IMR-90 (cell line): ENCODE measurements at regions of chr13 and their contacts with region 1.

Region 1: DNA sequence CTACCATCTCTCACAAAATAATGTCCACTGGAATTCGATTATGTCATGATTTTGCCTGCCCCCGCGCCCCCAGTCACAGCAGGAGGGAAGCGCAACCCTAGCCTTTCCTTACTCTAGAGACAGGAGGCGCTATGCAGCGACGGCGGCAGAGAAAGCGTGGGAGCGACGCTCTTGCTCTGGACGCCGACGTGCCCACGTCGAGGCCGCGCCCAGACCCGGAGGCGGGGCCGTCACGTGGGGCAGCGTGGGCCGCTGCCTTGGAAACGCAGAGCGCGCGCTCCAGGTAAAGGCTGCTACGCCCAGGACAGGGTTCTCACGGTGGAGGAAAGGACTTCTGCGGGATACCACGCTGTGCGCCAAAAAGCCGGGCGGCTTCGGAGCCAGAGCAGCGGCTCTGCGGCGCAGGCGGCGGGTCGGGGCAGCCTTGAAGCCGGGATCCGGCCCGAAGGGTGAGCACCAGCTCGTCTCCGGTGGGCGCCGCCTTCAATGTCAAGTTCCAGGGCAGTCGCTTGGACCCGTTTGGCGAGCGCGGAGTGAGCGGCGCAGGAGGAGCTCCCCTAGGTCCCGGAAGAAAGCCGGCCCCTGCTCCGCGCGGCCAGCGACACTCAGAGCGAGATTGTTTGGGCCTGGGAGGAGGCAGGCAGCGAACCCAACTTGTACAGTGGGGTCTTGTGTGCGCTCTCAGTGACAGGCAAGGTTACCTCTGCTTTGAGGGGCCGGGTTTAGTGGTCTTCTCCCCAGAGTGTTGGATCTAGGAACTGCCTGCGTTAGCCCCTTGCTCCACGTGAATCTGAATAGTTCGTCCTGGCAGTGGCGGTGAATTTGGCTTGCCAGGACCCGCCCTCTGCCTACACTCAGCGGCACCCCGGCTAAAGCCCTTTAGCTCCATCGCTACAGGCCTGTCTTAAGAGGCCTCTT is 121.7 kb downstream of the MRPL57 start:
- DNase-seq: peak; percentile 87
- ATAC-seq: peak; percentile 99
- H3K4me3 ChIP-seq: peak overlapping the region; percentile 87
- H3K27ac ChIP-seq: peak overlapping the region; percentile 33; the same call in 1 of the 2 replicates
- H3K4me1 ChIP-seq: no peaks in the 10 kb centered on the region; the same call in 1 of the 2 replicates
- H3K27me3 ChIP-seq: no peaks in the 10 kb centered on the region
- CTCF ChIP-seq: peak; percentile 93
- POLR2A ChIP-seq: no peak
- RAD21 ChIP-seq: peak; percentile 47

Region 2: DNA sequence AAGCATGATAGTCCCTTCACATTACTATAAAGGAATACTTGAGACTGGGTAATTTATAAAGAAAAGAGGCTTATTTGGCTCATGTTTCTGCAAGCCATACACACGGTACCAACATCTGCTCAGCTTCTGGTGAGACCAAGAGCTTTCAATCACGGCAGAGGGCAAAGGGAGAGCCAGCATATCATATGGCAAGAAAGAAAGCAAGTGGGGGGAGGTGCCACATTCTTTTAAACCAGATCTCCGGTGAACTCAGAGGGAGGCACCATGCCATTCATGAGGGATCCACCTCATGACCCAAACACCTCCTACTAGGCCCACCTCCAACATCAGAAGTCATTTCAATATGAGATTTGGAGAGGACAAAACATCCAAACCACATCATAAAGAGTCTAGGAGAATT is 416.0 kb before region 1 on chr13:
- CTCF ChIA-PET with region 1: no interaction called
- POLR2A ChIA-PET with region 1: no interaction called
- dilution Hi-C with region 1: no loop called
- in situ Hi-C with region 1: no loop called
- intact Hi-C with region 1: no loop called
- DNase-seq: peak; percentile 8
- ATAC-seq: no peak
- H3K4me3 ChIP-seq: no peak overlapping the region
- H3K27ac ChIP-seq: no peak overlapping the region
- H3K4me1 ChIP-seq: peaks cover 6% of the 10 kb centered on the region
- H3K27me3 ChIP-seq: no peaks in the 10 kb centered on the region
- CTCF ChIP-seq: no peak
- POLR2A ChIP-seq: no peak
- RAD21 ChIP-seq: no peak

Region 3: GRCh38 chr13:21006141-21007005 is 291.8 kb before region 1 on chr13:
- CTCF ChIA-PET with region 1: no interaction called
- POLR2A ChIA-PET with region 1: no interaction called
- dilution Hi-C with region 1: no loop called
- in situ Hi-C with region 1: no loop called
- intact Hi-C with region 1: no loop called
- DNase-seq: no peak
- ATAC-seq: no peak
- H3K4me3 ChIP-seq: no peak overlapping the region
- H3K27ac ChIP-seq: peak overlapping the region; percentile 29
- H3K4me1 ChIP-seq: peaks cover 18% of the 10 kb centered on the region
- H3K27me3 ChIP-seq: no peaks in the 10 kb centered on the region
- CTCF ChIP-seq: no peak
- POLR2A ChIP-seq: no peak
- RAD21 ChIP-seq: no peak

Region 4: DNA sequence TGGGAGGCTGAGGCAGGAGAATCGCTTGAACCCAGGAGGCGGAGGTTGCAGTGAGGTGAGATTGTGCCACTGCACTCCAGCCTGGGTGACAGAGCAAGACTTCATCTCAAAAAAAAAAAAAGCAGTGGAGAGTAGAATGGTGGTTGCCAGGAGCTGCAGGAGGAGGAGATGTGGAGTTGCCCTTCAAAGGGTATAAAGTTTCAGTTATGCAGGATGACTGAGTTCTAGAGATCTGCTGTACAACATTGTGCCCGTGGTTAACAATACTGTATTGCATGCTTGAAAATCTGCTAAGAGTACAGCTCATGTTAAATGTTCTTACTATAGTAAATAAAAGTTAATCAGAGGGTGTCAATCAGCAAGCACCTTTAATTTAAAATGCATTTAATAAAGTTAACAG is 208.3 kb before region 1 on chr13:
- CTCF ChIA-PET with region 1: no interaction called
- POLR2A ChIA-PET with region 1: no interaction called
- dilution Hi-C with region 1: no loop called
- in situ Hi-C with region 1: no loop called
- intact Hi-C with region 1: no loop called
- DNase-seq: no peak
- ATAC-seq: no peak
- H3K4me3 ChIP-seq: no peak overlapping the region
- H3K27ac ChIP-seq: no peak overlapping the region
- H3K4me1 ChIP-seq: no peaks in the 10 kb centered on the region
- H3K27me3 ChIP-seq: no peaks in the 10 kb centered on the region
- CTCF ChIP-seq: no peak
- POLR2A ChIP-seq: no peak
- RAD21 ChIP-seq: no peak

Region 5: GRCh38 chr13:21176220-21176982 is 121.8 kb before region 1 on chr13 and contains the starts of genes MRPL57 and SKA3:
- CTCF ChIA-PET with region 1: no interaction called
- POLR2A ChIA-PET with region 1: no interaction called
- dilution Hi-C with region 1: no loop called
- in situ Hi-C with region 1: no loop called
- intact Hi-C with region 1: loop called (anchors 2 kb)
- DNase-seq: peak; percentile 91
- ATAC-seq: peak; percentile 91
- H3K4me3 ChIP-seq: peak within 1 kb of the TSS; percentile 87
- H3K27ac ChIP-seq: peak within 1 kb of the TSS; percentile 87
- H3K4me1 ChIP-seq: 0 out of 2 replicates have a peak, but pooled peaks cover 2% of the 10 kb centered on the region
- H3K27me3 ChIP-seq: no peaks in the 10 kb centered on the region
- CTCF ChIP-seq: no peak
- POLR2A ChIP-seq: peak; percentile 85
- RAD21 ChIP-seq: 0 out of 2 replicates have a peak, but pooled peaks have one; percentile 18
- total RNA-seq, gene MRPL57: 5.3 and 7.0 TPM in 2 replicates
- total RNA-seq, gene SKA3: 15.6 and 24.4 TPM in 2 replicates

Region 6: DNA sequence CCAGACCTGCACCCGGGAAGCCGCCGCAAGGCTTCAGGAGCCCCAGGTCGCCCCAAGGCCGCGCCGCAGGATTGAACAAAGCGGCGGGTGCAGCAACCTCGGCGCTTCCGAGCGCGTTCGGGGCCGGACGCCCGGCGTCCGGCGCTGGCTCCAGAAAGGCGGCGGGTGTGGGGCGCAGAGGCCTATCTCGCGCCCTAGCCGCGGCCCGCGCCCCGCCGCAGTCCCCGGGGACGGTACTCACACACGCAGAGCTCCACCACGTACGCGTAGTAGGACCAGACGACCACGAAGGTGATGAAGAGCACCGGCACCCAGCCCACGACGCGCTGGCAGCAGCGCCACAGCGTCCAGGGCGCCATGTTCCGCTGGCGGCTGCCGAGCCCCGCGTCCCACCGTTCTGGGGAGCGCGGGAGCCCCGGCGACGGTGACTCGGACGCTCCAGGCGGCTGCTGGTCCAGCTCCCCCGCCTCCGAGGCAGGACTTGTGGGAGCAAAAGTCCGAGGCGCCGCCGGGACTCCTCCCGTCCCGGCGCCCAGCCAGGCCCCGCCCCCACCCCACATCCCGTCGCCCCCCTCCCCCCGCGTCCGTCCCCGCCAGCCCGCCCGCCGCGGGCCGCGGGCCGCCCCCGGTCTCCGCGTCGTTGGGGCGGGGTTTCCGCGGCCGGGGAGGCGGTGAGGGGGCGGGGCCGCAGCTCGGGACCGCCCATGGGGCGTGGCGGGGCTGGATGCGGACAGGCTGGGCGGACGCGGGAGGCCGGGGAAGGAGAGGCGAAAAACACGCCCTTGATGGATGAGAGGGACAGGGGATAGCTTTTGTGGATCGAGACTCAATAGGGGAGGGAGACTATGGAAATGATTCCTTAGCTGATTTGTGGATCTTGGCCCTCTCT is 160.9 kb after region 1 on chr13 and contains the start of gene ZDHHC20:
- CTCF ChIA-PET with region 1: interaction called, 3 read pairs
- POLR2A ChIA-PET with region 1: no interaction called
- dilution Hi-C with region 1: no loop called
- in situ Hi-C with region 1: no loop called
- intact Hi-C with region 1: loop called (anchors 1 kb)
- DNase-seq: peak; percentile 78
- ATAC-seq: peak; percentile 98
- H3K4me3 ChIP-seq: peak within 1 kb of the TSS; percentile 88
- H3K27ac ChIP-seq: peak within 1 kb of the TSS; percentile 76
- H3K4me1 ChIP-seq: no peaks in the 10 kb centered on the region
- H3K27me3 ChIP-seq: no peaks in the 10 kb centered on the region
- CTCF ChIP-seq: no peak
- POLR2A ChIP-seq: peak; percentile 71
- RAD21 ChIP-seq: 0 out of 2 replicates have a peak, but pooled peaks have one; percentile 4
- total RNA-seq, gene ZDHHC20: 72.4 and 104 TPM in 2 replicates

Region 7: DNA sequence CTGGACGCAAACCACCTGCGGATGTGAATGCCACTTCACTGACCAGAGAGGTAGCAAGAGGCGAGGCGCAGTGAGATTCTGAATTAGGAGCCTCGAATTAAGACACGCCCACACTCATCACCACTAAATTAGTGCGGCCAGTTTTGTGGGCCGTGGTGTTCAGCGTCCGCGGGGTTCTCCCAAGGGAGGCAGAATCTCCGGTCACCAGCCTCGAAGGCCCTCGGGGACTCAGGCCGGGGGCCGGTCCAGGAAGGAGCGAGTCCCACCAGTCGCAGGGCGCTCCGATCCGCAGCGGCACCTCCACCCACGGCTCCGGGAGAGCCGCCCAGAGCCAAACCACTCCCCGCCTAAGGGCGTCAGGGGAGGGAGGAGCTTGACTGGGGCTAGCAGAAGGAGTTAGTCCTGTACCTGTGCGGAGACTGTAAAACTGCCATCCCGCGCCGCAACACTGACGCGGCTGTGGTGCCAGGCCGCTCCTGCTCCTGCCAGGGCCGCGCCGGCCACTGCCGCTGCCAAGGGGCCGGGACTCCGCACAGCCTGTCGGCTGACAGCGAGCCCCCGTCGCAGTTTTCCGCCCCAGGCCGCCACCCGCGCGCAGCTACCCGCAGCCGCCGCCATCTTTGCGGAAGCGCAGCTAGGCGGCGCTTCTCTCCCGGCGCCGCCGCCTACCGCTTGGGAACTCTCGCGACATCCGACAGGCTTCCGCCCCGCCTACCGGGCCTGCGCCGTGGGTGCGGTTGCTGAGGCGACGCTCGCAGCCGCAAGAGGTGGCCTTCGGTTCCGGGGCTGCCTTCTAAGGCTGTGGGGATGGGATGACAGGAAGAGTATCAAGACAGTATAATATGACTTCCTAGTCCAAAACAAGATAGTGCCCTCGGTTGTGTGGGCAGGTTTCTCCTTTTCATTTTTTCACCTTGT is 305.6 kb after region 1 on chr13 and contains the start of gene MICU2:
- CTCF ChIA-PET with region 1: no interaction called
- POLR2A ChIA-PET with region 1: no interaction called
- dilution Hi-C with region 1: no loop called
- in situ Hi-C with region 1: no loop called
- intact Hi-C with region 1: loop called (anchors 10 kb)
- DNase-seq: peak; percentile 93
- ATAC-seq: peak; percentile 99
- H3K4me3 ChIP-seq: peak within 1 kb of the TSS; percentile 83
- H3K27ac ChIP-seq: peak within 1 kb of the TSS; percentile 84
- H3K4me1 ChIP-seq: no peaks in the 10 kb centered on the region
- H3K27me3 ChIP-seq: no peaks in the 10 kb centered on the region; the same call in 1 of the 2 replicates
- CTCF ChIP-seq: no peak
- POLR2A ChIP-seq: peak; percentile 94
- RAD21 ChIP-seq: no peak
- total RNA-seq, gene MICU2: 14.9 and 29.2 TPM in 2 replicates